ENCODE measurements at regions of chr3 and their contacts with region 1.

Region 1: GRCh38 chr3:182258538-182259177 is 534.6 kb upstream of the ATP11B start:
- DNase-seq: peak; percentile 55
- H3K4me3 Mint-ChIP-seq: no peak overlapping the region
- H3K27ac Mint-ChIP-seq: peak overlapping the region; percentile 62
- H3K4me1 Mint-ChIP-seq: peaks cover 5% of the 10 kb centered on the region
- H3K27me3 Mint-ChIP-seq: no peaks in the 10 kb centered on the region
- CTCF ChIP-seq: peak; percentile 78

Region 2: DNA sequence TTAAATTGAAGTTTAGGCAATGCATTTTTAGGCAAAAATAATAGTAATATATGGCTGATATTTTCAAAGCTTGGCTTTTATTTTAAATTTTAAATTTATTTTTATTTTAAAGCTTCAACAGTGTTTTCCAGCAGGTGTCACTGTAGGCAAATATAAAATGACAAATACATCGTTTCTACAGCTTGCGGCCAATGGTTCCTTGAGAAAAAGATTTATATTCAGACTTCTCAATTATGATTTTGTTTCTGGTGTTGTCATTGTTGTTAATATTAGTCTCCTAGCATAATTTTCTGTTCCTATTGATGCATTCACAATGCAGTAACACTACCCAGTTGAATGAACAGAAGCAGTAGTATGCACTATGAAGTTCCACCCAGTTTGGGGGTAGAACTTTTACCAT is 1048.4 kb before region 1 on chr3:
- CTCF ChIA-PET with region 1: no interaction called
- POLR2A ChIA-PET with region 1: no interaction called
- intact Hi-C with region 1: loop called (anchors 5 kb)
- DNase-seq: peak; percentile 42
- H3K4me3 Mint-ChIP-seq: no peak overlapping the region
- H3K27ac Mint-ChIP-seq: no peak overlapping the region
- H3K4me1 Mint-ChIP-seq: no peaks in the 10 kb centered on the region
- H3K27me3 Mint-ChIP-seq: no peaks in the 10 kb centered on the region
- CTCF ChIP-seq: peak; percentile 55

Region 3: GRCh38 chr3:181567311-181568075 is 691.2 kb before region 1 on chr3:
- CTCF ChIA-PET with region 1: no interaction called
- POLR2A ChIA-PET with region 1: no interaction called
- intact Hi-C with region 1: loop called (anchors 10 kb)
- DNase-seq: peak; percentile 49
- H3K4me3 Mint-ChIP-seq: no peak overlapping the region
- H3K27ac Mint-ChIP-seq: peak overlapping the region; percentile 12
- H3K4me1 Mint-ChIP-seq: peaks cover 15% of the 10 kb centered on the region
- H3K27me3 Mint-ChIP-seq: no peaks in the 10 kb centered on the region
- CTCF ChIP-seq: no peak

Region 4: DNA sequence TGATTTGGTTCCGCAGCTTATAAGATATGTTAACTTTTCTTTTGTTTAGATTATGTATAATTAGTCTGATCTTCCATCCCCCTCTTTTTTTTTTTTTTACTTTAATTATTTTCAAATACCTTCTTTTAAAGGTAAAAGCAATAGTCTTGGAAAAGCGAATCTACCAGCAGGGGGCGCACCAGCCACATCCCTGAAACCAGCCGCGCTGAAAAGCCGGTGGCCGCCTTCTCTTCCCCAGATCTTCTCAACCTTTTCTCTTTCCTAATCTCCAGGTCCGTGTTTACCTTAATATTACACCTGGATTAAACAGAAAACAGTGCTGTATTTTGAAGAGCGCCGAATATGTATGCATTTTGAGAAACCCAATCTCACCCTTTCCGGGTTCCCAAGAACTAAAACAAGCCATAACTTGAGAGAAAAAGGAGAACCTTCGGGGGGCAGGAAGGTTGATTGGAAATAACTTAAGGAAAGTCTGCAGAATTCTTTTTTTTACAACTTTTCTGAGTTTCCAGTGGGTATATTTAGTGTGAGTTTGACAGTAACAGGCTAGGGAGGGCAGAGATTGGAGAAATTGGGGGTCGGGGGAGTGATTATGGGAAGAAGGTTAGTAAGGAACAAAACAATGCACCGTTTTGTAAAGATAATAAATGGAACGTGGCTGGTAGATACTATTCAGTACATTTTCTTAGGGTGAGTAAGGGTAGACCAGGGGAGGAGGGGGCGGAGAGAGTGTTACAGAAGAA is 549.0 kb before region 1 on chr3:
- CTCF ChIA-PET with region 1: interaction called, 6 read pairs
- POLR2A ChIA-PET with region 1: no interaction called
- intact Hi-C with region 1: loop called (anchors 1 kb)
- DNase-seq: peak; percentile 75
- H3K4me3 Mint-ChIP-seq: peak overlapping the region; percentile 59
- H3K27ac Mint-ChIP-seq: no peak overlapping the region
- H3K4me1 Mint-ChIP-seq: peaks cover 8% of the 10 kb centered on the region
- H3K27me3 Mint-ChIP-seq: no peaks in the 10 kb centered on the region
- CTCF ChIP-seq: peak; percentile 59

Region 5: DNA sequence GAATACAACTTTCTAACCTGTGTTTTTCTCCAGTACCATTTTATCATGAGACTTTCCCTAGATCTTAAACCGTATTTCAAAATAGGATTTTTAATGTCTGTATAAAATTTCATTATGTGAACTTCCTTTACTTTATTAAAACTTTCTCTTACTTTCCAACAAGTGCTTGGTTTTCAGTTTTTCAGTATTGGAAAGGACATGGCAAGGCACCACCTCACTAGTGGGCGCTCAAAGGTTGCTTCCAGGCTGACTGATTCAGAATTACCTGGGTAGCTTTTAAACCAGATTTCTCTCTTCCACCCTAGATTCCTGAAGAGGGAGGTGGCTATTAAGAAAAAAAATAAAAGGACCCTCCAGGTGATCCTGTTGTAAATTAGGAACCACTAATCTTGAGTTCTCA is 310.4 kb before region 1 on chr3:
- CTCF ChIA-PET with region 1: interaction called, 17 read pairs
- POLR2A ChIA-PET with region 1: no interaction called
- intact Hi-C with region 1: loop called (anchors 1 kb)
- DNase-seq: peak; percentile 27
- H3K4me3 Mint-ChIP-seq: no peak overlapping the region
- H3K27ac Mint-ChIP-seq: no peak overlapping the region
- H3K4me1 Mint-ChIP-seq: no peaks in the 10 kb centered on the region
- H3K27me3 Mint-ChIP-seq: no peaks in the 10 kb centered on the region
- CTCF ChIP-seq: peak; percentile 43

Region 6: GRCh38 chr3:182238126-182238525 is 20.5 kb before region 1 on chr3:
- CTCF ChIA-PET with region 1: no interaction called
- POLR2A ChIA-PET with region 1: no interaction called
- intact Hi-C with region 1: no loop called
- DNase-seq: no peak
- H3K4me3 Mint-ChIP-seq: no peak overlapping the region
- H3K27ac Mint-ChIP-seq: no peak overlapping the region
- H3K4me1 Mint-ChIP-seq: peaks cover 14% of the 10 kb centered on the region
- H3K27me3 Mint-ChIP-seq: no peaks in the 10 kb centered on the region
- CTCF ChIP-seq: no peak

Region 7: GRCh38 chr3:182490596-182491491 is 232.2 kb after region 1 on chr3:
- CTCF ChIA-PET with region 1: no interaction called
- POLR2A ChIA-PET with region 1: no interaction called
- intact Hi-C with region 1: loop called (anchors 5 kb)
- DNase-seq: peak; percentile 62
- H3K4me3 Mint-ChIP-seq: no peak overlapping the region
- H3K27ac Mint-ChIP-seq: no peak overlapping the region
- H3K4me1 Mint-ChIP-seq: no peaks in the 10 kb centered on the region
- H3K27me3 Mint-ChIP-seq: no peaks in the 10 kb centered on the region
- CTCF ChIP-seq: peak; percentile 36

Region 8: GRCh38 chr3:182618085-182618732 is 359.6 kb after region 1 on chr3:
- CTCF ChIA-PET with region 1: interaction called, 3 read pairs
- POLR2A ChIA-PET with region 1: no interaction called
- intact Hi-C with region 1: loop called (anchors 1 kb)
- DNase-seq: peak; percentile 47
- H3K4me3 Mint-ChIP-seq: no peak overlapping the region
- H3K27ac Mint-ChIP-seq: peak overlapping the region; percentile 15
- H3K4me1 Mint-ChIP-seq: peaks cover 30% of the 10 kb centered on the region
- H3K27me3 Mint-ChIP-seq: no peaks in the 10 kb centered on the region
- CTCF ChIP-seq: peak; percentile 51

Region 9: DNA sequence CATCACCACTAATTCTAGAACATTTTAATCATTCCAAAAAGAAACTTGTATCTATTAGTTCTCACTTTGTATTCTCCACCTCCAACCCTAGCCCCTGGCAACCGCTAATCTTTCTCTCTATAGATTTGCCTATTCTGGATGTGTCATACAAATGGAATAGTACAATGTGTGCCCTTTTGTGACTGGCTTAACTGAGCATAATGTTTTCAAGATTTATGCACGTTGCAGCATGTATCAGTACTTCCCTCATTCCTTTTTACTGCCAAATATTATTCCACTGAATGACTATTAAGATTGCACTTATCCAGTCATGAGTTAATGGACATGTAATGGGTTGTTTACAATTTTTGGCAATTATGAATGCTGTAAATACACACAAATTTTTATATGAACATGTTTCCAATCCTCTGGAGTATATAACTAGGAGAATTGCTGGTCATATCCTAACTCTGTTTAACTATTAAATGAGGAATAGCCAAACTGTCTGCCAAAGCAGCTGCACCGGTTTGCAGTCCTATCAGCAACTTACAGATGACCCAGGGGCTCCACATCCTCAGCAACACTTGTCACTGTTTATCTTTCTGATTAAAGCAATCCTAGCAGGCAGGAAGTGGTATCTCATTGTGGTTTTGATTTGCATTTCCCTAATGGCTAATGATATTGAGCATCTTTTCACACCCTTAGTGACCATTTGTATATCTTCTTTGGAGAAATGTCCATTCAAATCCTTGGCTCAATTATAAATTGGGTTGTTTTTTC is 678.8 kb after region 1 on chr3:
- CTCF ChIA-PET with region 1: no interaction called
- POLR2A ChIA-PET with region 1: no interaction called
- intact Hi-C with region 1: no loop called
- DNase-seq: no peak
- H3K4me3 Mint-ChIP-seq: no peak overlapping the region
- H3K27ac Mint-ChIP-seq: no peak overlapping the region
- H3K4me1 Mint-ChIP-seq: no peaks in the 10 kb centered on the region
- H3K27me3 Mint-ChIP-seq: no peaks in the 10 kb centered on the region
- CTCF ChIP-seq: no peak